AG04450 (cell line): ENCODE measurements at regions of chr6 and their contacts with region 1.

Region 1: DNA sequence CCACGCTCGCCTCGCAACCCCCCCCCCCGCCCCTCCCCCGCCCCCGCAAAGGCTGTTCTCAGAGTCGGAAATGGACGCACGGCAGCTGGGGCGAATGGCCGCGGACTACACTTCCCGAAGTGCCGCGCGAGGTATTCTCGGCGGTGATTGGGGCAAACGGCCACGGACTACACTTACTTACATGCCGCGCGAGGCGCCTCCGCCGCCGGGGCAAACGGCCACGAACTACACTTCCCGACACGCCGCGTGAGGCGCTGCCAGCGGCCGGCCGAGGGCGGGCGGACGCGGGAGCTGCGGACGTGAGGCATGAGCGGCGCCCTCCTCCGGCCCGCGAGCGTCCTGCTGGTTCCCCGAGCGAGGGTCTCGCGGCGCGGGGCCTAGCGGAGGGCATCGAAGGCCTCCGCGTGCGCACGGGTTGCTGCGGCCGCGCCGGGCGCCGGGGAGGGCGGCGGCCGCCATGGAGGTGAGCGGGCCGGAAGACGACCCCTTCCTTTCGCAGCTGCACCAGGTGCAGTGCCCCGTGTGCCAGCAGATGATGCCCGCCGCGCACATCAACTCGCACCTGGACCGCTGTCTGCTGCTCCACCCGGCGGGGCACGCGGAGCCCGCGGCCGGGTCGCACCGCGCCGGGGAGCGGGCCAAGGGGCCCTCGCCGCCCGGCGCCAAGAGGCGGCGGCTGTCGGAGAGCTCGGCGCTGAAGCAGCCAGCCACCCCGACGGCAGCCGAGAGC is at the start of gene WRNIP1:
- DNase-seq: peak; percentile 98
- H3K4me3 ChIP-seq: peak within 1 kb of the TSS; percentile 91
- H3K27ac ChIP-seq: peak within 1 kb of the TSS; percentile 92
- H3K27me3 ChIP-seq: no peaks in the 10 kb centered on the region
- CTCF ChIP-seq: peak; percentile 50
- polyA plus RNA-seq, gene WRNIP1: 28.0 and 35.2 TPM in 2 replicates

Region 2: GRCh38 chr6:2783188-2783963 is 18.0 kb after region 1 on chr6:
- CTCF ChIA-PET with region 1: interaction called, 11 read pairs
- POLR2A ChIA-PET with region 1: interaction called, 7 read pairs
- DNase-seq: no peak
- H3K4me3 ChIP-seq: no peak overlapping the region
- H3K27ac ChIP-seq: no peak overlapping the region
- H3K27me3 ChIP-seq: no peaks in the 10 kb centered on the region
- CTCF ChIP-seq: 0 out of 2 replicates have a peak, but pooled peaks have one; percentile 5